Activated CD4-positive, alpha-beta memory T cell treated with anti-CD3 and anti-CD28 coated beads, Interleukin-2, amount 10 ng/mL, durations not matched to agents 7 days and 5 days (primary cell): ENCODE measurements at regions of chr3 and their contacts with region 1.

Region 1: DNA sequence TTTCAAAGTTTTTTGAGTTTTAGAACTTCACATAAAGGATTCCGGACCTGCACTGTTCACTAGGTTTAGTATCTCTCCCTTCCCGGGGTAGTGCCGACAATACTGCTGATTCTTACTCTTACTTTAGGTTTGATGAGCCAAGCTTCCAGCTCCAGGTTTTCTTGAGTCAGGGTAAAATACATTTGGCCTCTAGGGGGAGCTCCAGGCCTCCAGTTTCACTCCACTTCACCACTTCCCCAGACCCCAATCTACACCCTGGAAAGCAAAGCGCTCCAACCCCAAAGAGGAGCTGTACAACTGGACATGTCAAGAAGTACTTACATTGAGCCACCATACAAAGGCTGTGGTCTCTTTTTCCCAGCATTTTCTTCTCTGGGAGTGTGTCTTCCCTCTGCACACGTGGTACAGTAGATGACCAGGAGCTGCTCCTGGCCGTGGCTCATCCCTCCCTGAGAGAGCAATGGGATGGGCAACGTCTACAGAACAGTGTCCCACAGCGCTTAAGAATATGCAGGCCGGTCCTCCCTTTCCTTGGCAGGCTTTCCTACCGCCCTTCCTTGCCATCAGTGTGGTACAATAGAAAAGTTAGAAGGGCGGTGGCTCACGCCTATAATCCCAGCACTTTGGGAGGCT is 93.9 kb upstream of the CCDC80 start:
- DNase-seq: peak; percentile 71
- H3K4me3 Mint-ChIP-seq: no peak overlapping the region
- H3K27ac Mint-ChIP-seq: no peak overlapping the region
- H3K4me1 Mint-ChIP-seq: peaks cover 48% of the 10 kb centered on the region
- H3K27me3 Mint-ChIP-seq: no peaks in the 10 kb centered on the region

Region 2: DNA sequence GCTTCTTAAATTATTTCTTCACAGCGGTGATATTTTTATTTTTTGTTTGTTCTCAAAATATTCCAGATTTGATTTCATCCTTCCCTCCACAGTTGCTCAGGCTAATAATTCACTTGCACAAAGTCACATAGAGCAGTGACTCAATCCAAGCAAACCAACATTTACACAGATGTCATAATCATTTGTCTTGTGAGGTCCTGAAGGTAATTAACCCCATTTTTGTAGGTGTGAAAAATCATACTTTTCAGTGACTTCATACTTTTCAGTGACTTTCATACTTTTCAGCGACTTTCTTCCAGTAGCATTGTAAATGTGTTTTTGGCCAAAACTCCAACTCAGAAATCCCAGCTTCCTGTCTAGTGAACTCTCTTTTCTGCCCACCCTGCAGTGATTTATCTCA is 369.8 kb before region 1 on chr3:
- CTCF ChIA-PET with region 1: no interaction called
- POLR2A ChIA-PET with region 1: no interaction called
- DNase-seq: no peak
- H3K4me3 Mint-ChIP-seq: no peak overlapping the region
- H3K27ac Mint-ChIP-seq: no peak overlapping the region
- H3K4me1 Mint-ChIP-seq: peaks cover 22% of the 10 kb centered on the region
- H3K27me3 Mint-ChIP-seq: no peaks in the 10 kb centered on the region

Region 3: GRCh38 chr3:112473212-112473640 is 261.6 kb before region 1 on chr3:
- CTCF ChIA-PET with region 1: no interaction called
- POLR2A ChIA-PET with region 1: no interaction called
- DNase-seq: peak; percentile 21
- H3K4me3 Mint-ChIP-seq: peak overlapping the region; percentile 50
- H3K27ac Mint-ChIP-seq: peak overlapping the region; percentile 81
- H3K4me1 Mint-ChIP-seq: peaks cover 63% of the 10 kb centered on the region
- H3K27me3 Mint-ChIP-seq: no peaks in the 10 kb centered on the region

Region 4: GRCh38 chr3:112676659-112677234 is 58.1 kb before region 1 on chr3:
- CTCF ChIA-PET with region 1: interaction called, 12 read pairs
- POLR2A ChIA-PET with region 1: interaction called, 5 read pairs
- DNase-seq: peak; percentile 93
- H3K4me3 Mint-ChIP-seq: peak overlapping the region; percentile 38
- H3K27ac Mint-ChIP-seq: peak overlapping the region; percentile 94
- H3K4me1 Mint-ChIP-seq: peaks cover 72% of the 10 kb centered on the region
- H3K27me3 Mint-ChIP-seq: no peaks in the 10 kb centered on the region

Region 5: DNA sequence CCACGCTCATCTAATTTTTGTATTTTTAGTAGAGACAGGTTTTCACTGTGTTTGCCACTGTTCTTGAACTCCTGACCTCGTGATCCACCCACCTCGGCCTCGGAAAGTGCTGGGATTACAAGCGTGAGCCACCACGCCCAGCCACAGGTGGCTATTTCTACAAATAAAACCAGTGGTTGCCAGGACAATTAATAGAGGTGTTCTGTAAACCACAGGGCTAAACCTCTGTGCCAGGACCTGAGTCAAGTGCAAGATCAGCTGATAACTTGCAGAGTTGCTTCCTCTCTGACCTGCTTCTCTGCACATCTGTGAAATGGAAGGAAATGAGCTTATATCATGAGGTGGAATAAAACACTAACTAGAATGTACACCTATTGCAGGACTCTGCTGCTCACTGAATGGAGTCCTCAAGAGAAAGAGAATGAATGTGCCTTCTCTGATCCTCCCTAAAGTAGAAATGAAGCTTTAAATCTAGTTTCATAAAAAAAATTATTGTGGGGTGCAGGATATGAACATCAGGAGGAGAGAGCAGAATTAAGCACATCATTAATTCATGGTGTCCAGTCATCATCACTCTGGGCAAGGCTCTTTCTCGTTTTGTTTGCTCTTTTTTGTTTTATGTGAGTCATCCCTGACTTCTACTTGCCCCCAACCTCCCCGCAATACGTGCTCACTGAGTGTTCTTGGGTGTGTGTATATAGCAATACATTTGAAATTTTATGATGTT is 39.2 kb after region 1 on chr3:
- CTCF ChIA-PET with region 1: interaction called, 16 read pairs
- POLR2A ChIA-PET with region 1: interaction called, 8 read pairs
- DNase-seq: peak; percentile 65
- H3K4me3 Mint-ChIP-seq: peak overlapping the region; percentile 12
- H3K27ac Mint-ChIP-seq: peak overlapping the region; percentile 84
- H3K4me1 Mint-ChIP-seq: peaks cover 61% of the 10 kb centered on the region
- H3K27me3 Mint-ChIP-seq: no peaks in the 10 kb centered on the region

Region 6: DNA sequence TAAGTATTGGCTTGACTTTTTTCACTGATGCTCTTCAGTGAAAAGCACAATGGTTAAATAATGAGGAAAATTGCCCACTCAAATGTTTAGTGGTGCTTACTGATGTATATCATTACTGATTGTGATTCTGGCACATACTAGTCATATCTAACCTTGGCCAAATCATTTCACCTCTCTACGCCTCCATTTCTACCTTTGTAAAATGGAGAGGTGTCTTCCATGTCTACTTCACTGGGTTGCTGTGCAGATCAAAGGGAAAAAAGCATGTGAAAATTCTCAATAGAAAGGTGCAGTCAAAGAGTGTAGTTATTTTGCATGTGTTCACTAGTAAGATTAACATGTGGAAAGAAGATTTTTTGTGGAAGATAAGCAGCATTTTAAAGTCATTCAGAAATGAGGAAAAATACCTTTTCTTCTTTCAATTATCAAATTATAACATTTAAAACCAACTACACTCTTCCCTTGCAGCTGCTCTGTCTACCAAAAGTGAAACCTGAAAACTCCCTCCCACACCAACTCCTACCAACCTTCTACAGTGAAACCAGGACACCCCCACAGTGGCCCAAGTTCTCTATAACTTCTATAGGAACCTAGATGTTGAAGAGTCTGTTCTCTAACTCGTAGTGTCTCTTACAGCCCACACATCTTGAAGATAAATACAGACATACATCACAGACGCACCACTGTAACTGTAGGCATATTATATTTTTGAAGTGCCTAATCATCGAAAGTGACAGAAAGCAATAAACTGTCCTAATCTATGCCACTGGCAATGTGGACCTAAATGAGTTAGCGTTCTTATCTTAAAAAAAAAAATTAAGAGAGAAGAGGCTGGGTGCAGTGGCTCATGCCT is 238.7 kb after region 1 on chr3:
- CTCF ChIA-PET with region 1: interaction called, 88 read pairs
- POLR2A ChIA-PET with region 1: interaction called, 11 read pairs
- DNase-seq: peak; percentile 44
- H3K4me3 Mint-ChIP-seq: peak overlapping the region; percentile 97
- H3K27ac Mint-ChIP-seq: peak overlapping the region; percentile 83
- H3K4me1 Mint-ChIP-seq: peaks cover 76% of the 10 kb centered on the region
- H3K27me3 Mint-ChIP-seq: peaks cover 2% of the 10 kb centered on the region

Region 7: GRCh38 chr3:113057117-113057516 is 322.3 kb after region 1 on chr3:
- CTCF ChIA-PET with region 1: no interaction called
- POLR2A ChIA-PET with region 1: no interaction called
- DNase-seq: no peak
- H3K4me3 Mint-ChIP-seq: no peak overlapping the region
- H3K27ac Mint-ChIP-seq: no peak overlapping the region
- H3K4me1 Mint-ChIP-seq: no peaks in the 10 kb centered on the region
- H3K27me3 Mint-ChIP-seq: no peaks in the 10 kb centered on the region